Astrocyte of the spinal cord (primary cell): ENCODE measurements at regions of chr3 and their contacts with region 1.

Region 1: GRCh38 chr3:139561959-139562676 is 22.6 kb upstream of the RBP1 start:
- DNase-seq: peak; percentile 54
- H3K4me3 ChIP-seq: no peak overlapping the region
- CTCF ChIP-seq: peak; percentile 82

Region 2: GRCh38 chr3:139414608-139415224 is 147.4 kb before region 1 on chr3:
- in situ Hi-C with region 1: no loop called
- DNase-seq: no peak
- H3K4me3 ChIP-seq: no peak overlapping the region
- CTCF ChIP-seq: no peak

Region 3: DNA sequence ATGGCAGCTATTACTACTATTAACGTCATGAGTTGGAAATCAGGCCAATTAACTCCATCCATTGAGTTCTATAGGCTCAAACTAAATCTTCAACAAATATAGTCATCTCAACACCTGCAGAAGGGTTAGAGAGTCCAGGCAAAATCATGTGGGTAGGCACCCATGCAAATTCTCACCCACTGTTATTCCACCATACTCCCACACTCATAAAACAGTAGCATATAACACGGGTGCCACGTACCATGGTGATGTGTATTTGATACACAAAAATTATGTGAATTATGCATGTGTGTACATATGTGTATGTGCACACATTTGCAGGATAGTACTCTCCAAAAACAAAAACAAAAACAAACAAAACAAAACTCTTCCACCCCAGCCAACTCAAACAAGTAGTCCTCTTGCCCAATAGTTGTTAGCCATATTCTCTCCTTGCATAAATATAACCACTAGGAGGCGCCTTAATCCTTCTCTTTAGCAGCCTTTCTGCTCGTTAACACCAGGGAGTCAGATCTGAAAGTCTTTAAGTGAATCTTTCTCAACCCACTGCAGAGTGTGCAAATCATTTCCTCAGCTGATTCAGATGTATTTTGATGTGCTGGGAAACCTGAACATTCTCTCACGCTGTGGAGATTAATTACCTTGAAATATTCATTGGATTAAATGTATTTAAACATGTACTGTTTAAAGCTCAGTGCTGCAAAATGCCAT is 134.7 kb before region 1 on chr3:
- in situ Hi-C with region 1: loop called (anchors 25 kb)
- DNase-seq: peak; percentile 82
- H3K4me3 ChIP-seq: no peak overlapping the region
- CTCF ChIP-seq: peak; percentile 70

Region 4: GRCh38 chr3:139732729-139733128 is 170.6 kb after region 1 on chr3:
- in situ Hi-C with region 1: no loop called
- DNase-seq: no peak
- H3K4me3 ChIP-seq: no peak overlapping the region
- CTCF ChIP-seq: no peak

Region 5: GRCh38 chr3:139780593-139780992 is 218.5 kb after region 1 on chr3:
- in situ Hi-C with region 1: no loop called
- DNase-seq: no peak
- H3K4me3 ChIP-seq: no peak overlapping the region
- CTCF ChIP-seq: no peak